ENCODE measurements at regions of chr10 and their contacts with region 1.

Region 1: DNA sequence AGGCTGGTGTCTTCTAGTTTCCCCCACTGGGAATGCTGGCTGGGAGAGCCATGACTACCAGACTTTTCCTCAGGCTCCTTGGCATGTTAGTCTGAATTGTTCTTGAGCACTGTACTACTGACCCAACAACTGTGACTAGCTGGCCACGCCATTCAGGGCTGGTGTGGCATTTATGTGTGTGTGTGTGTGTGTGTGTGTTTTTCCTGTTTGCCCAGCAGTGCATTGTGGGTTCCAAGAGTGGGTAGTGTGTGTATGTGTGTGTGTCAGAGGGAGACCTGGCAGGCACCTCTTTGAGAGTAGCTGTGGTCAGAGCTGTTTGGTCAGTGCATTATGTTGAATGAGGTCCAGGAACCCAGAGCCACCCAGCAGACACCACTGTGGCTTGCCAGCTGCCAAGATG is 9.2 kb downstream of the PCBD1 start:
- DNase-seq: no peak
- H3K4me3 ChIP-seq: no peak overlapping the region
- H3K27ac ChIP-seq: no peak overlapping the region
- H3K4me1 ChIP-seq: peaks cover 0 to 5% (median 0%) of the 10 kb centered on the region in 3 donors
- H3K27me3 ChIP-seq: no peaks in the 10 kb centered on the region
- CTCF ChIP-seq: no peak
- POLR2A ChIP-seq: no peak

Region 2: GRCh38 chr10:70812814-70813213 is 66.4 kb before region 1 on chr10:
- intact Hi-C with region 1: loop called (anchors 5 kb)
- DNase-seq: no peak
- H3K4me3 ChIP-seq: no peak overlapping the region
- H3K27ac ChIP-seq: no peak overlapping the region
- H3K4me1 ChIP-seq: peaks cover 8 to 62% (median 8%) of the 10 kb centered on the region in 3 donors
- H3K27me3 ChIP-seq: no peaks in the 10 kb centered on the region
- CTCF ChIP-seq: no peak
- POLR2A ChIP-seq: no peak

Region 3: DNA sequence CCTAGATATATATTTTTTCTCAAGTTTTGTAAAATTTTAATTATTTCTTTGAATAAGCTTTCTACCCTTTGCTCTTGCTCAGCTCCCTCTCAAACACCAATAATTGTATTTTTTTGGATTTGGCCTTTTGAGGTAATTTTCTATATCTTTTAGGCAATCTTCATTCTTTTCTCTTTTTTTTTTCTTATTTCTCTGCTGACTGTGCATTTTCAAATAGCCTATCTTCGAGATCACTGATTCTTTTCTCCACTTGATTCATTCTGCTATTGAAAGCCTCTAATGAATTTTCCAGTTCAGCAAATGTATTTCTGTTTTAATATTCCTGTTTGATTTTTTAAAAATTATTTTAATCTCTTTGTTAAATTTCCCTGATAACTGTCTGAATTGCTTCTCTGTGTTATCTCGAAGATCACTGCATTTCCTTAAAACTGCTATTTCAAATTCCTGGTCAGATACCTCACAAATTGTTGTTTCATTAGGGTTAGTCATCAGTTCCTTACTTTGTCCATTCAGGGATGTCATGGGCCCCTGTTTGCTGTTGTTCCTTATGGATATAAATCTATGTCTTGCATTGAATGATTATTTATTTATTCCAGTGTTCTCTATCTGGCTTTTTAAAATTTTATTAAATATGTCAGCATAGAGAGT is 233.1 kb after region 1 on chr10:
- intact Hi-C with region 1: no loop called
- DNase-seq: no peak
- H3K4me3 ChIP-seq: no peak overlapping the region
- H3K27ac ChIP-seq: no peak overlapping the region
- H3K4me1 ChIP-seq: no peaks in the 10 kb centered on the region
- H3K27me3 ChIP-seq: peaks cover 0 to 15% (median 0%) of the 10 kb centered on the region in 4 donors
- CTCF ChIP-seq: no peak
- POLR2A ChIP-seq: no peak

Region 4: GRCh38 chr10:72659694-72660093 is 1780.5 kb after region 1 on chr10:
- intact Hi-C with region 1: no loop called
- DNase-seq: no peak
- H3K4me3 ChIP-seq: no peak overlapping the region
- H3K27ac ChIP-seq: no peak overlapping the region
- H3K4me1 ChIP-seq: no peaks in the 10 kb centered on the region
- H3K27me3 ChIP-seq: peaks cover 0 to 3% (median 0%) of the 10 kb centered on the region in 4 donors
- CTCF ChIP-seq: no peak
- POLR2A ChIP-seq: no peak